Activated CD4-positive, alpha-beta T cell treated with anti-CD3 and anti-CD28 coated beads for 36 hours (primary cell): ENCODE measurements at regions of chr19 and their contacts with region 1.

Region 1: DNA sequence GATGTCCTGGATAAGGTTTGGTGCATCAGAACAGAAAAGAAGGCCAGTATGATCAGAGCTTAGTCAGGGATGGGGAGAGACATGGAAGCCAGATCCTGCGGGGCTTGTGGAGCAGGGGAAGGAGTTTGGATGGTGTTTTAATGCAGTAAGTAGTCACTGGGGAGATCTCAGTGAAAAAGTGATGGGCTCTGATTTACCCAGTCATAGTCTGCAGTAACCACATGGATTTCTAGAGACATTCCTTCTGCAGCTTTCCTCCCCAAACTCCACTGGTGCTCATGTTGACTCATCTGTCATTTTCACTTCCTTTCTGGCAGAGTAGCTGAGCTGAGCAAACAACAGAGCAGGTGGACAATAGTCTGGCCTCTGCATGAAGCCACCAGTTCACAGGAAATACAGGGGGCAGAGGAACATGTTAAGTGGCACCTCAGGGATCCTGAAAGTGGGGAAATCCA is 144.1 kb downstream of the DPF1 start:
- DNase-seq: peak; percentile 14
- ATAC-seq: peak; percentile 50
- H3K4me3 Mint-ChIP-seq: no peak overlapping the region
- H3K27ac Mint-ChIP-seq: peak overlapping the region; percentile 65
- H3K4me1 Mint-ChIP-seq: peaks cover 21% of the 10 kb centered on the region
- H3K27me3 Mint-ChIP-seq: no peaks in the 10 kb centered on the region

Region 2: GRCh38 chr19:38004521-38005223 is 75.3 kb before region 1 on chr19:
- CTCF ChIA-PET with region 1: no interaction called
- POLR2A ChIA-PET with region 1: no interaction called
- intact Hi-C with region 1: loop called in 1 of 2 experiments (anchors 1 kb)
- DNase-seq: peak; percentile 41
- ATAC-seq: peak; percentile 51
- H3K4me3 Mint-ChIP-seq: no peak overlapping the region
- H3K27ac Mint-ChIP-seq: no peak overlapping the region
- H3K4me1 Mint-ChIP-seq: peaks cover 7% of the 10 kb centered on the region
- H3K27me3 Mint-ChIP-seq: no peaks in the 10 kb centered on the region

Region 3: GRCh38 chr19:38039966-38040365 is 40.0 kb before region 1 on chr19:
- CTCF ChIA-PET with region 1: no interaction called
- POLR2A ChIA-PET with region 1: interaction called, 3 read pairs
- intact Hi-C with region 1: loop called in 1 of 2 experiments (anchors 2 kb)
- DNase-seq: peak; percentile 26
- ATAC-seq: peak; percentile 84
- H3K4me3 Mint-ChIP-seq: no peak overlapping the region
- H3K27ac Mint-ChIP-seq: no peak overlapping the region
- H3K4me1 Mint-ChIP-seq: peaks cover 3% of the 10 kb centered on the region
- H3K27me3 Mint-ChIP-seq: no peaks in the 10 kb centered on the region

Region 4: GRCh38 chr19:38049105-38049649 is 30.8 kb before region 1 on chr19:
- CTCF ChIA-PET with region 1: interaction called, 3 read pairs
- POLR2A ChIA-PET with region 1: interaction called, 7 read pairs
- intact Hi-C with region 1: loop called in 1 of 2 experiments (anchors 1 kb)
- DNase-seq: peak; percentile 73
- ATAC-seq: peak; percentile 91
- H3K4me3 Mint-ChIP-seq: peak overlapping the region; percentile 67
- H3K27ac Mint-ChIP-seq: peak overlapping the region; percentile 97
- H3K4me1 Mint-ChIP-seq: peaks cover 47% of the 10 kb centered on the region
- H3K27me3 Mint-ChIP-seq: no peaks in the 10 kb centered on the region

Region 5: DNA sequence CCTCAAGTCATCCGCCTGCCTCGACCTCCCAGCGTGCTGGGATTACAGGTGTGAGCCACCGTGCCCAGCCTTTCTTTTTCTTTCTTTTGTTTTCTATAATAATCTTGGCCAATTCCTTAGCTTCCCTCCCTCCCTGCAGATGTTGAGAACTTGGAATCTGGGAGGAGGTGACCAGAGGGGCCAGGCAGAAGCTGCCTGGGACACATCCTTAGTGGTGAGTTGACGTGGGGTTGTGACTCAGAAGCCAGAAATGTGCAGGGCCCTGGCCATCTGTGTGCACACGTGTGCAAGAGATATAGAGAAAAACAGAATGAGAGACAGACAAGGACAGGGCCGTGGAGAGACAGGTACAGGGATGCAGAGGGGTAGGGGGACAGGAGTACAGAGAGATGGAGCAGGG is 18.7 kb before region 1 on chr19:
- CTCF ChIA-PET with region 1: interaction called, 4 read pairs
- POLR2A ChIA-PET with region 1: interaction called, 7 read pairs
- intact Hi-C with region 1: loop called in 1 of 2 experiments (anchors 1 kb)
- DNase-seq: no peak
- ATAC-seq: no peak
- H3K4me3 Mint-ChIP-seq: no peak overlapping the region
- H3K27ac Mint-ChIP-seq: no peak overlapping the region
- H3K4me1 Mint-ChIP-seq: peaks cover 11% of the 10 kb centered on the region
- H3K27me3 Mint-ChIP-seq: no peaks in the 10 kb centered on the region

Region 6: GRCh38 chr19:38213911-38214625 is 134.1 kb after region 1 on chr19:
- CTCF ChIA-PET with region 1: no interaction called
- POLR2A ChIA-PET with region 1: no interaction called
- intact Hi-C with region 1: loop called in 1 of 2 experiments (anchors 1 kb)
- DNase-seq: peak; percentile 90
- ATAC-seq: peak; percentile 95
- H3K4me3 Mint-ChIP-seq: peak overlapping the region; percentile 67
- H3K27ac Mint-ChIP-seq: peak overlapping the region; percentile 78
- H3K4me1 Mint-ChIP-seq: peaks cover 24% of the 10 kb centered on the region
- H3K27me3 Mint-ChIP-seq: peaks cover 51% of the 10 kb centered on the region

Region 7: DNA sequence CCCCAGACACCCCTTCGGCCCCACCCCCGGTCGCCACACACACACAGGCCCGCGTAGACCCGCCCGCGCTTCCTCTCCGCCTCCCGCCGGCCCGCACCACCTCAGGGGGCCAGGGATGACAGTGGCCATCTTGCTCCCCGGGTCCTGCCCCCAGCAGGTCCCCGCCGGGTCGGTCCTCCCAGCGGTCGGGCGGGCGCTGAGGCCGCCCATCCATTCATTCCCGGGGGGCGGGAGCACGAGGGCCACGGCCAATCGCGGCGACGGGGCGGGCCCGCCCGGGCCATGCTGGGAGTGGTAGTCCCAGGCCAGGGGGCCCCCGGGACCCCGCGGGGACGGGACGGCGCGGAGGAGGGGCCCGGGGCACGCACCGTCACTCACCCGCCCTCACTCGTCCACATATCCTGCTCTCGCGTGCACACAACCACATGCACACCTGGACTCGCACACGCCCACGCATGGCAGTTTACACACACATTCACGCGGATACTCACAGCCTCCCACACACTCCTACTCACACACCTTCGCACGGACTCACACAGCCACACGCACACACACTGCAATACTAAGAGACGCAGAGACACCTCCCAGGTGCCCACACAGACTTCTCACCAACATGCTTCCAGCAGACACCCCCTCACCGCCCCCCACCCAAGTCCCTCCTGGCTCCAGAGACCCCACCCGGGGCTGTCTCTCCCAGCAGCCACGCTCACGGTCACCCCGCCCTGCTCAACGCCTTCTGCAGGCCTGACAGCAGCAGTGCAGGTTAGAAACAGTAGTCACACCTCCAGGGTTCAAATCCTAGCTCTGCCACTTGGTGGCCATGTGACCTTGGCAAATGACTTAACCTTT is 144.3 kb after region 1 on chr19 and contains the start of gene DPF1:
- CTCF ChIA-PET with region 1: no interaction called
- POLR2A ChIA-PET with region 1: no interaction called
- intact Hi-C with region 1: no loop called
- DNase-seq: peak; percentile 76
- ATAC-seq: peak; percentile 85
- H3K4me3 Mint-ChIP-seq: peak within 1 kb of the TSS; percentile 63
- H3K27ac Mint-ChIP-seq: peak within 1 kb of the TSS; percentile 45
- H3K4me1 Mint-ChIP-seq: peaks cover 23% of the 10 kb centered on the region
- H3K27me3 Mint-ChIP-seq: peaks cover 54% of the 10 kb centered on the region
- total RNA-seq, gene DPF1: 0.91 to 1.2 TPM